B cell (primary cell): ENCODE measurements at regions of chr19 and their contacts with region 1.

Region 1: DNA sequence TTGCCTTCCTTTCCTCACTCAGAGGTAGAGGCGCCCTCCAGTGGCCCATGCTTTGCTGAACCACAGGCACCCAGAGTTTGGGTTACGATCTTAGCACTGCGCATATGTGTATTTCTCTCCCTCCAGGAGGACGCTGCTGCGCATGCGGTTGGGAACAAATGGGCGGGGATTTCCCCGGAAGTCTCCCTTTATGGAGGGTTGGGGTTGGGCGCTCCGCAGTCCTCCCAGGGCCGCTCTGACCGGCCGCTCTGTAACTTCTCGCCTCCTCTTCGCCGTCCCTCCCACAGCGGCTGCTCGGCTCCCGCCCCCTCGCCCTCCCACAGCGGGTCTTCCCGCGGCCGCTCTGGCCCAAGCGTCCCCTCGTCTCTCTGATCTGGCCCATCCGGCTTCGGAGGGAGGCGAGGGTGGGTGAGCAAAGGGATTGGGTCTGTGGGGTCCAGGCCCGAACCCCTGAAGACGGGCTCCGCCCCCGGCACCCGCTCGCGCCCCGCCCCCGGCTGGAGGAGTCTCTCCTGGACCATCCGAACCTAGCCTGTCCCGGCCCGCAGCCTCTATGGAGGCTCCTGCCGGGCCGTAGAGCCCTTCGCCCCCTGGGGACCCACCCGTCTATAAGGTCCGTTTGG is at the start of gene MEGF8:
- DNase-seq: peak; percentile 99
- ATAC-seq: peak; percentile 91
- H3K4me3 ChIP-seq: peak within 1 kb of the TSS; percentile 61 to 99 (median 93)
- H3K4me3 Mint-ChIP-seq: peak within 1 kb of the TSS; percentile 88
- H3K27ac ChIP-seq: peak within 1 kb of the TSS; percentile 53 to 69
- H3K27ac Mint-ChIP-seq: peak within 1 kb of the TSS; percentile 90
- H3K4me1 ChIP-seq: peaks cover 28 to 31% of the 10 kb centered on the region in 2 donors
- H3K4me1 Mint-ChIP-seq: peaks cover 22% of the 10 kb centered on the region
- H3K27me3 ChIP-seq: peaks cover 0 to 23% (median 3%) of the 10 kb centered on the region in 4 experiments
- H3K27me3 Mint-ChIP-seq: peaks cover 10% of the 10 kb centered on the region
- CTCF ChIP-seq: peak; percentile 86
- total RNA-seq, gene MEGF8: 26.5 and 26.6 TPM in 2 replicates

Region 2: DNA sequence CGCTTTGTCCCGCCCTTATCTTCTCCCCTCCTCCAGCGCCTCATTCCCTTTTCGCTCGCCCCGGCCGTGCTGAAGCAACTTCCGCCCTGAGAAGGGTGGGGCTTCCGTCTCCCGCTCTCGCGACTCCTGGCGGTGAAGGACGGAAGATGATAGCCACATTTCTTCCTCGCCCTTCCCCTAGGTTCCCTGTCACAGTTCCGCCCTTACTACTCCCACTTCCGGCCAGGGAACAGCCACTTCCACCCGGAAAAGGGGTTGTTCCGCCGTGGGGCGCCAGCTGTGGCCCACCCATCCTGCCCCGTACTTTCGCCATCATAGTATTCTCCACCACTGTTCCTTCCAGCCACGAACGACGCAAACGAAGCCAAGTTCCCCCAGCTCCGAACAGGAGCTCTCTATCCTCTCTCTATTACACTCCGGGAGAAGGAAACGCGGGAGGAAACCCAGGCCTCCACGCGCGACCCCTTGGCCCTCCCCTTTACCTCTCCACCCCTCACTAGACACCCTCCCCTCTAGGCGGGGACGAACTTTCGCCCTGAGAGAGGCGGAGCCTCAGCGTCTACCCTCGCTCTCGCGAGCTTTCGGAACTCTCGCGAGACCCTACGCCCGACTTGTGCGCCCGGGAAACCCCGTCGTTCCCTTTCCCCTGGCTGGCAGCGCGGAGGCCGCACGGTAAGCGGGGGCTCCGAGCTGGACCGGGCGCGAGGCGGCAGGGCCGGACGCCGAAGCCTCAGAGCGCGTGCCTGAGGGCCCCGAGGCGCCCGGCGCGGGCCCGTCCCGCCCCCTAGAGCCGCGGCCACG is 465.6 kb before region 1 on chr19 and contains the start of gene RPS19:
- CTCF ChIA-PET with region 1: no interaction called
- POLR2A ChIA-PET with region 1: no interaction called
- intact Hi-C with region 1: loop called (anchors 1 kb)
- DNase-seq: peak; percentile 99
- ATAC-seq: peak; percentile 84
- H3K4me3 ChIP-seq: peak within 1 kb of the TSS; percentile 75 to 96 (median 75)
- H3K4me3 Mint-ChIP-seq: peak within 1 kb of the TSS; percentile 92
- H3K27ac ChIP-seq: peak within 1 kb of the TSS; percentile 92 to 94
- H3K27ac Mint-ChIP-seq: peak within 1 kb of the TSS; percentile 97
- H3K4me1 ChIP-seq: peaks cover 40 to 48% of the 10 kb centered on the region in 2 donors
- H3K4me1 Mint-ChIP-seq: peaks cover 45% of the 10 kb centered on the region
- H3K27me3 ChIP-seq: no peaks in the 10 kb centered on the region
- H3K27me3 Mint-ChIP-seq: no peaks in the 10 kb centered on the region
- CTCF ChIP-seq: peak; percentile 86
- total RNA-seq, gene RPS19: 3,294 and 3,322 TPM in 2 replicates

Region 3: DNA sequence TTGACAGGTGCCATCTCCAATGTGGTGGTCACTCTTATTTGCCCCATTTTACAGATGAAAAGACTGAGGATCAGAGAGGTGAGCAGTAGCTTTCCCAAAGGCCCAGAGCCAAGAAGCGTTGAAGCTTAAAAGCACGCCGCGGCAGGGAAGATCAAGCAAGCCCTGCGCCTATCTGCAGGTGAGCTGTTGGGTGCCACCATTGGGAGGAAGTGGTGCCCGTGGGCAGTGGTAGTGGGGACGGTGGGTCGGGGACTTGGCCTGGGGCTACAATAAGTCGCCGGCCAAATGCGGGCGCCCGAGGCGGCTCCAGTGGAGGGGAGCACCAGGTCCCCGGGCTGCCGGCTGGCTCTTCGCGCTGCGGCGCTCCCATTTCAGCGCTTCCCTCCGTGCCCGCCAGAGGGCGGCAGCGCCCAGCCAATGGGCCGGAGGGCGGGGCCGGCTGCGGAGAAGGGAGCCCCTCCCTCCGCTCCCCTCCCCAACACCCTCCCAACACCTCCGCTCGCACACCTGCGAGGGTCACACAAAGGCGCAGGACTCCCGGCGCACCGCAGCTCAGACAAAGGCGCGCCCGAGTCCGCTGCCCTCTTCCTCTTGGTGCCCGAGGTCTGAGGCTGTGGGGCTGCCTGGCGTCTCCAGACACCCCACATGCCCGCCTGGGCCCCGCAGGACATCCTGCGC is 192.4 kb before region 1 on chr19:
- CTCF ChIA-PET with region 1: interaction called, 3 read pairs
- POLR2A ChIA-PET with region 1: interaction called, 4 read pairs
- intact Hi-C with region 1: loop called (anchors 1 kb)
- DNase-seq: peak; percentile 93
- ATAC-seq: peak; percentile 42
- H3K4me3 ChIP-seq: peak overlapping the region; percentile 92 to 100 (median 98)
- H3K4me3 Mint-ChIP-seq: peak overlapping the region; percentile 92
- H3K27ac ChIP-seq: peak overlapping the region; percentile 51 to 71
- H3K27ac Mint-ChIP-seq: peak overlapping the region; percentile 97
- H3K4me1 ChIP-seq: peaks cover 41 to 70% of the 10 kb centered on the region in 2 donors
- H3K4me1 Mint-ChIP-seq: peaks cover 77% of the 10 kb centered on the region
- H3K27me3 ChIP-seq: no peaks in the 10 kb centered on the region
- H3K27me3 Mint-ChIP-seq: no peaks in the 10 kb centered on the region
- CTCF ChIP-seq: peak; percentile 100

Region 4: GRCh38 chr19:42268704-42269477 is 56.5 kb before region 1 on chr19 and contains the start of gene CIC:
- CTCF ChIA-PET with region 1: no interaction called
- POLR2A ChIA-PET with region 1: no interaction called
- intact Hi-C with region 1: loop called (anchors 1 kb)
- DNase-seq: peak; percentile 100
- ATAC-seq: peak; percentile 76
- H3K4me3 ChIP-seq: peak within 1 kb of the TSS; percentile 74 to 95 (median 90)
- H3K4me3 Mint-ChIP-seq: peak within 1 kb of the TSS; percentile 88
- H3K27ac ChIP-seq: peak within 1 kb of the TSS; percentile 98 to 100
- H3K27ac Mint-ChIP-seq: peak within 1 kb of the TSS; percentile 96
- H3K4me1 ChIP-seq: peaks cover 26 to 32% of the 10 kb centered on the region in 2 donors
- H3K4me1 Mint-ChIP-seq: peaks cover 24% of the 10 kb centered on the region
- H3K27me3 ChIP-seq: no peaks in the 10 kb centered on the region
- H3K27me3 Mint-ChIP-seq: no peaks in the 10 kb centered on the region
- CTCF ChIP-seq: no peak
- total RNA-seq, gene CIC: 119 and 123 TPM in 2 replicates

Region 5: GRCh38 chr19:42363614-42364346 is 38.4 kb after region 1 on chr19:
- CTCF ChIA-PET with region 1: no interaction called
- POLR2A ChIA-PET with region 1: no interaction called
- intact Hi-C with region 1: loop called (anchors 1 kb)
- DNase-seq: peak; percentile 82
- ATAC-seq: peak; percentile 54
- H3K4me3 ChIP-seq: peak overlapping the region in 1 of 5 experiments; percentile 11
- H3K4me3 Mint-ChIP-seq: peak overlapping the region; percentile 17
- H3K27ac ChIP-seq: peak overlapping the region; percentile 81 to 87
- H3K27ac Mint-ChIP-seq: peak overlapping the region; percentile 86
- H3K4me1 ChIP-seq: peaks cover 38 to 47% of the 10 kb centered on the region in 2 donors
- H3K4me1 Mint-ChIP-seq: peaks cover 47% of the 10 kb centered on the region
- H3K27me3 ChIP-seq: no peaks in the 10 kb centered on the region
- H3K27me3 Mint-ChIP-seq: no peaks in the 10 kb centered on the region
- CTCF ChIP-seq: no peak

Region 6: DNA sequence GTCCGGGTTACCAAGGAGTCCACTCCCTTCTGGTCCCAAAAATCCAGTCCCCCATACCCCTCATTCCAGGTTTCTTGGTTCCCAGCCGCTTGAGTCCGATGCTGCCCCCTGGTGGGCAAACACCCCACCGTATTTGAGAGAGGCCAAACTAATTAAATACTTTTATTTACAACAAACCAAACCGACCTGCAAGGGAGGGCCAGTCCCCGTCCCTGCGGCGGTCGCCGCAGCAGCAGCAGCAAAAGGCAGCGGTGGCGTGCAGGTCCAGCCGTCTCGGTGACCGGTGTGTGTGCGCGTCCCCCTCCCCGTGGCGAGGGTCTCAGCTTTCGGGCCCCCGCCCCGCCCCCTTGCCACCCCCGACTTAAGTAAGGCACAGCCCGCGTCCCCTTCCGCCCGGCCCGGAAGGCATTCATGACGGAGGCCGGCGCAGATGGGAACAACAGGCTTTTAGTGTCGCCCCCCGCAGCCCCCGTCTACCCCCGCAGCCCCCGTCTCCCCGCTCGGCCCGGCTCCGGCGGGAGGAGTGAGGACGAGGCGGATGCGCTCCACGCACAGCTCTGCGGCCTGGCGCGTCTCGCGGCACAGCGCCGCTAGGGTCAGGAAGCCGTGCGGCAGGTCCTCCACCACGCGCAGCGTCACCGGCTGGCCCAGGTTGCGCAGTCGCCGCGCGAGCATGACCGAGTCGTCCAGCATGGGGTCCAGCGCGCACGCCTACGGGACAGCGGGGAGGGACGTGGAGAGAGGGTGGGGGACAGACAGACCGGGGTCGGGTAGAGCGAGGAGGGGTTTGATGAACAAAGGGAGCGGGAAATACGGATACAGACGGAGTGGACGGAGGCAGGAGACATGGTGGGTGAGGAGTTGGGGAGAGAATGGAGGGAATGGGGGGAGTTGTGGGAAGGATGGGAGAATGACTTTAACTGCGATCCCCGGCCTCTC is 76.2 kb after region 1 on chr19:
- CTCF ChIA-PET with region 1: interaction called, 6 read pairs
- POLR2A ChIA-PET with region 1: interaction called, 4 read pairs
- intact Hi-C with region 1: loop called (anchors 1 kb)
- DNase-seq: peak; percentile 85
- ATAC-seq: peak; percentile 50
- H3K4me3 ChIP-seq: peak overlapping the region in 4 of 5 experiments; percentile 45 to 67 (median 52)
- H3K4me3 Mint-ChIP-seq: peak overlapping the region; percentile 89
- H3K27ac ChIP-seq: peak overlapping the region in 1 of 2 donors; percentile 15
- H3K27ac Mint-ChIP-seq: peak overlapping the region; percentile 87
- H3K4me1 ChIP-seq: peaks cover 21 to 35% of the 10 kb centered on the region in 2 donors
- H3K4me1 Mint-ChIP-seq: peaks cover 41% of the 10 kb centered on the region
- H3K27me3 ChIP-seq: no peaks in the 10 kb centered on the region
- H3K27me3 Mint-ChIP-seq: no peaks in the 10 kb centered on the region
- CTCF ChIP-seq: peak; percentile 82

Region 7: DNA sequence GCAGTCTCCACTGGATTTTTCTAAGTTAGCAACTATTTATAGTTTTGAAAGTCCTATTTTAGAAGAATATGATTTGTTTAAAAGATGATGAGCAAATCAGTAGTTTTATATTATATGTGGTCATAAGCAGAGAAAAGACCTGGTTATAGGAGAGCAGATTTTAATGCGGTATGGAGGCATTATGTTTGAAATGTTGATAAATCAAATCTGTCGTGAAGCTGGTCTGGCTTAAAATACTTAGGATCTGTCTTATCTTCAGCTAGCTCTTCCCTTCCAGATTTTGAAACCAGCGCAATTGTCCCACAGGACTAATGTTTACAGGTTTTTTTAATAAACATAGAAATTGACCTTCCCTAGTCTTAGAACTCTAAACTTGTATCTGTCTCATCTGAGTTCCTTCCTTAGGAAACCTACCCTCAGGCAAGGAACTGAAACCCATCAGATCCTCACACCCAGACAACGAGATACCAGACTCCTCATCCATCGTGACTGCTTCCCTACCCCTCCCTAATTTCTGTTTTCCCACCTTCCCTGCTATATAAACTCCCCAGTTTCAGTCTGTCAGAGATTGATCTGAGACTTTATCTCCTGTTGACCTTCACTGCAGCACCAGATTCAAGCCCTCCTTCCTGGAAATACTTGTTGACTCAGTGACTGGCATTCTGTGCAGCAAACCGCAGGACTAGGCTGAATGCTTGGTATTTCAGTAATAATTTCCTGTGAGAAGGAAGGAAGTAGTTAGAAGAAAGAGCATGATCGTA is 155.1 kb after region 1 on chr19:
- CTCF ChIA-PET with region 1: no interaction called
- POLR2A ChIA-PET with region 1: no interaction called
- intact Hi-C with region 1: no loop called
- DNase-seq: no peak
- ATAC-seq: no peak
- H3K4me3 ChIP-seq: no peak overlapping the region
- H3K4me3 Mint-ChIP-seq: peak overlapping the region; percentile 4
- H3K27ac ChIP-seq: no peak overlapping the region
- H3K27ac Mint-ChIP-seq: no peak overlapping the region
- H3K4me1 ChIP-seq: peaks cover 10 to 11% of the 10 kb centered on the region in 2 donors
- H3K4me1 Mint-ChIP-seq: peaks cover 11% of the 10 kb centered on the region
- H3K27me3 ChIP-seq: no peaks in the 10 kb centered on the region
- H3K27me3 Mint-ChIP-seq: no peaks in the 10 kb centered on the region
- CTCF ChIP-seq: no peak